HEK293 (cell line): ENCODE measurements at regions of chr19 and their contacts with region 1.

Region 1: GRCh38 chr19:18683213-18683939 is at the start of gene CRTC1:
- H3K4me3 ChIP-seq: peak within 1 kb of the TSS; percentile 73
- H3K27ac ChIP-seq: peak within 1 kb of the TSS; percentile 31; the same call in 1 of the 2 replicates
- H3K4me1 ChIP-seq: no peaks in the 10 kb centered on the region
- CTCF ChIP-seq: no peak

Region 2: DNA sequence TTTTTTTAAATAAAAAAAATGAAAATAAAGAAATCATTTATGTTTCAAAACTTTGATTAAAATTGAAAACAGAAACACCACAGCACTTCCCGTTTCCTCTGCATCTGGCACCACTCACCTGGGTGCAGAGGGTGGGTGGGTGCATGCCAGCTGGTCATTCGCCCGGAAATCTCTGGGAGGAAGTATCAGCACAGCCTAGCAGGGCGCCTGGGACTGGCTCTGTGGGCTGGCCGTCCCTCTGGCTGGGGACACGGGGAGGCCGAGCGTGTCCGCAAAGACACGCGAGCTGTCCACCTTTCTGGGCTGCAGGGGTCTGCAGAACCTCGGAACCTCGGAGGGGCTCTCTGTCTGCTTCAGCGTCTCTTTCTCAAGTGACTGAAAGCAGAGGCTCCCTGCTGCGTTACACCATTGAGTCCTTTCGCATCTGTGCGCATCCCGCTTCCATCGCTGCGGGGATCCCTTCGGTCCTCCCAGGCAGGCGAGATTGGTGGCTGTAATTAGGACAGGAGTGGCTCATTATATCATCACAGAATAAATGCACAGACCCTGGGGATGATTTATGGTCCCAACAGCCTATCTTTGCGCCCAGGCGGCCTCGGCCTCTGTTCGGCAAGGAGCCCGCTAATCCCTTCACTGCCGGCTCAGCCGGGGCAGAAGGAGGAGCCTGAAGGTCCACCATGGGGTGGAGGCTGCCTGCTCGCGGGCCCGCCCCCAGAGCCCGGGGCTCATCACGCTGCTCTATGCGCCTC is 17.3 kb after region 1 on chr19:
- CTCF ChIA-PET with region 1: no interaction called
- POLR2A ChIA-PET with region 1: interaction called, 12 read pairs
- H3K4me3 ChIP-seq: peak overlapping the region; percentile 43
- H3K27ac ChIP-seq: no peak overlapping the region; the same call in 1 of the 2 replicates
- H3K4me1 ChIP-seq: peaks cover 8% of the 10 kb centered on the region
- CTCF ChIP-seq: no peak

Region 3: GRCh38 chr19:18875726-18876125 is 192.3 kb after region 1 on chr19:
- CTCF ChIA-PET with region 1: no interaction called
- POLR2A ChIA-PET with region 1: no interaction called
- H3K4me3 ChIP-seq: no peak overlapping the region
- H3K27ac ChIP-seq: no peak overlapping the region
- H3K4me1 ChIP-seq: peaks cover 5% of the 10 kb centered on the region
- CTCF ChIP-seq: no peak